Panc1 (cell line): ENCODE measurements at regions of chr15 and their contacts with region 1.

Region 1: DNA sequence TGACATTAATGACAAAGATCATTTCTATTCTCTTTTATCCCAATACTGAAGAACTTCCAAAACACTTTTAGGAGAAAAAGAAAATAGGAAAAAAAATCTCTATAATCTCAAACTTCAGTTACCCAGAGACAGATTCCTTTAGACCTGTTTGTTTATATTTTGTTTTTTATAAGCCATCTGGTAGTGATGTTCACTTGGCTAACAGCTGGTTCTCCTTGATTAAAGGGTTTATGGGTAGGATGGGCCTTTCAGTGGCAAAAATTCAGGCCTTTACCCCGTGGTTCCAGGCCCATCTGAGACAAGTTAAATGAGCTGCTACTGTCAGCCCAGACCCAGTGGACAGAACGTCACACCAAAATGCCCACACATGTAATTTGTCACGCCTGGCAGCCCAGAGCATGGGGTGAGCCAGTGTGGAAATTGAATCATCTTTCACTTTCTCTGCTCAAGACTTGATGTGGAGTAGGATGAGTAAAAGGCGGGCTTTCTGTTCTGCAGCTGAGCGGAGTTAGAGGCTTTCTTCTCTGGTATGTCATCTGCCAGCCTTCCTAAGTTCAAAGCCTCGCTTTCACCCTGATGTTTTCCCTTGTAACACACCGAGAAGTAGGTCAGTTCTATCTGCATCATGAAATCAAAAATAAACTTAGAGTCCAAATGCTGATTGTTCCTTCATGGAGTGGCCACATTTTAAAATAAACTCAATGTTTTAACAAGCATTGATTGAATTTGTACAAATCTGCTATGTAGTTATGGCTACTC is 62.5 kb upstream of the SKOR1 start:
- DNase-seq: no peak
- ATAC-seq: no peak
- H3K4me3 ChIP-seq: no peak overlapping the region
- H3K27ac ChIP-seq: no peak overlapping the region
- H3K4me1 ChIP-seq: no peaks in the 10 kb centered on the region
- H3K27me3 ChIP-seq: no peaks in the 10 kb centered on the region
- CTCF ChIP-seq: no peak

Region 2: GRCh38 chr15:67892559-67893377 is 130.0 kb after region 1 on chr15:
- CTCF ChIA-PET with region 1: no interaction called
- POLR2A ChIA-PET with region 1: no interaction called
- in situ Hi-C with region 1: no loop called
- intact Hi-C with region 1: no loop called
- DNase-seq: no peak
- ATAC-seq: no peak
- H3K4me3 ChIP-seq: no peak overlapping the region
- H3K27ac ChIP-seq: peak overlapping the region; percentile 30
- H3K4me1 ChIP-seq: peaks cover 3% of the 10 kb centered on the region; the same call in 1 of the 2 replicates
- H3K27me3 ChIP-seq: no peaks in the 10 kb centered on the region
- CTCF ChIP-seq: no peak

Region 3: DNA sequence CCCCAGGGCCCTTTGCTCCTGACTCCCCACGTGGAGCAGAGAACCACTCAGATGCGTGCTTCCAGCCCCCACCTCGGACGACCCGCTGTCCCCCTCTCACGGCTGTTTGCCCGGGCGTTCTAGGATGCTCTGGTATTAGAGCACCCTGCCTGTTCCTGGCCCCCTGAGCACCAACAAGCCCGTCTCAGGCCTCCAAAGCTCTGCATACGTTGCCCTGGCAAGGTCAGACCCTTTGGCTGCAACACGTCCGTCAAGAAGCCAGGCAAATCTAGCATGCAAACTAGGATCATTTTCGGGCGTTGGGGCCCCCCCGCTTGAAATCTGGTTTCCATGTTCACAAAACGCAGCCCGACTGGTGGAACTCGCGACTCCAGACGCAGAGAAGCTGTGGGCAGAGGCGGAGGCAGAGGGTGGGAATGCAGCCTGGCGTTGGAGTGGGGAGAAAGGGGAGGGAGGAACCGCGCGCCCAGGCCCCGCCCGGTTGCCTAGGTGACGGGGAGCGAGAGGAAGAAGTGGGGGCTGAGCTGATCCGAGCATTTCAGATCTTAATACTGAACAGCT is 205.2 kb after region 1 on chr15:
- CTCF ChIA-PET with region 1: no interaction called
- POLR2A ChIA-PET with region 1: no interaction called
- in situ Hi-C with region 1: no loop called
- intact Hi-C with region 1: no loop called
- DNase-seq: no peak
- ATAC-seq: peak; percentile 92
- H3K4me3 ChIP-seq: peak overlapping the region; percentile 17 to 30
- H3K27ac ChIP-seq: peak overlapping the region; percentile 76
- H3K4me1 ChIP-seq: peaks cover 9% of the 10 kb centered on the region
- H3K27me3 ChIP-seq: no peaks in the 10 kb centered on the region
- CTCF ChIP-seq: no peak

Region 4: GRCh38 chr15:68252925-68253534 is 490.2 kb after region 1 on chr15:
- CTCF ChIA-PET with region 1: no interaction called
- POLR2A ChIA-PET with region 1: interaction called, 15 read pairs
- in situ Hi-C with region 1: no loop called
- intact Hi-C with region 1: no loop called
- DNase-seq: no peak
- ATAC-seq: peak; percentile 55
- H3K4me3 ChIP-seq: no peak overlapping the region
- H3K27ac ChIP-seq: no peak overlapping the region
- H3K4me1 ChIP-seq: peaks cover 6% of the 10 kb centered on the region; the same call in 1 of the 2 replicates
- H3K27me3 ChIP-seq: no peaks in the 10 kb centered on the region; the same call in 1 of the 2 replicates
- CTCF ChIP-seq: peak; percentile 87